ENCODE measurements at regions of chr18 and their contacts with region 1.

Region 1: DNA sequence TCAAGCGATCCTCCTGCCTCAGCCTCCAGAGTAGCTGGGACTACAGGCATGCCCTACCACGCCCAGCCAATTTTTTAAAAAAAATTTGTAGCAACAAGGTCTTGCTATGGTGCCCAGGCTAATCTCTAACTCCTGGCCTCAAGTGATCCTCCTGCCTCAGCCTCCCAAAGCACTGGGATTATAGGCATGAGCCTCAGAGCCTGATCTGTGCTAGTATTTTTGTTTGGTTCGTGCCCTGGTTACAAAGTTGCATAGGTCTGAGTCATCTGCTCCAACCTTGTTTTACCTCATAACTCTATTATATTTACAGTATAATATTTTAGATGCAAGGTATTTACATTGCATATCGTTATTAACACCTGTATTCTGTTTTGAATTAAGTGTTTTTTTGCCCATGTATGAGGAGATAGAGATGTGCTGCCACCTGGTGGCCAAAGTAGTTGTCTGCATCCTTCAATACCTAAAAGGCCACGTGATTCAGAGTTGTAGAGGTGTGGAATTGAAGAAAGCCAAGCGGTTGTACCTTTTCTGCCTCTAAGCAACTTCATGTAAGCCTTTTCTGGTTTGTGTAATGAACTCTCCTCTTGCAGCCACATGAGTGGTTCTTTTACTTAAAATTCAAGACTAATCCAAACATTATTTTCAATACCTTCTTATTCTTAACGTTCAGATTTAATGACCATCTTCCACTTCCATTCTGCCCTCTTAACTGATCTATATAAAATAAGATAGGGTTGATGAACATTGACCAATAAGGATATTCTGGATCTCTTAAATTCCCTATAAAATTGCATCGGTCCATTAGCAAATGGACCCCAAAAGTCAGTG is 19.9 kb upstream of the CABYR start:
- DNase-seq: peak; percentile 91
- H3K4me3 Mint-ChIP-seq: no peak overlapping the region
- H3K27ac Mint-ChIP-seq: no peak overlapping the region
- H3K4me1 Mint-ChIP-seq: peaks cover 14% of the 10 kb centered on the region
- H3K27me3 Mint-ChIP-seq: no peaks in the 10 kb centered on the region

Region 2: GRCh38 chr18:23515911-23516546 is 602.9 kb before region 1 on chr18:
- intact Hi-C with region 1: loop called (anchors 5 kb)
- DNase-seq: peak; percentile 93
- H3K4me3 Mint-ChIP-seq: no peak overlapping the region
- H3K27ac Mint-ChIP-seq: peak overlapping the region; percentile 57
- H3K4me1 Mint-ChIP-seq: peaks cover 26% of the 10 kb centered on the region
- H3K27me3 Mint-ChIP-seq: no peaks in the 10 kb centered on the region

Region 3: DNA sequence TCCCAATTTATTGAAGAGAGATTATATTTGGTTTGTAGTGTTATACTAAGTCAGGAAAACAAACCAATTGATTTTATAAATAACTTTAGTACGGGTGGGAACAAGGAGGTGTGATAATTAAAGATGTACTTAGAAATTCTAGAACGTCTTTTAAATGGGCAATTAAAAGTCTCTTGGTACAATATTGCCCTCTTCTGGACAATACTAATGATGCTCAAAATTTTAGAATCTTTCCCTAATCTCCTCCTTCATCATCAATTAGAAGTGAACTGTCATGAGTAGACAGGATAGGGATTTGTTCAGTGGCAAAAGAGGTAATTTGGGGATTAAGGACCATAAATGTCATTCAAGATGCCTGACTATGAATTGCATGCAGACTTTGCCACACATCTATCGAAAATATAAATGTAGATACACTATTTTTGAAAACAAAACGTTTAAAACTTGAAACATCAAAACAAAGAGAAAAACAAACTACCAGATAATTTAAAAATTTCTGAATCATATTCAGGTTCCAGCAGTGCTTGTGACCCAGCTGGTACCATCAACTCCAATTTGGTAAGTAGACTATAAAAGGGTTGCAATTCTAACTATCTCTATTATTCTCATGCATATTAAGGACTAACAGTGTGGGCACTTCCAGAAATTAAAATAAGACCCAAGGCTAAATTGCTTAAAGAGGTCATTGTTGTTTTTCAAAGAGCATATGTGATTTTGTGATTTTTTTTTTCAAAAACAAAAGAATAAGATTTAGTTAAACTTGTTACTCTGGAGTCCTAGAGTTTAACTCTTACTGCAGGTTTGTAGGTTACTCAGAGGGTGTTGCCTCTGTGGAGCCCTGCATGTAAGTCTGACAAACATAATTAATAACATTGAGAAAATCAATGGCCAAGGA is 306.2 kb before region 1 on chr18:
- intact Hi-C with region 1: loop called (anchors 1 kb)
- DNase-seq: no peak
- H3K4me3 Mint-ChIP-seq: no peak overlapping the region
- H3K27ac Mint-ChIP-seq: no peak overlapping the region
- H3K4me1 Mint-ChIP-seq: peaks cover 20% of the 10 kb centered on the region
- H3K27me3 Mint-ChIP-seq: peaks cover 28% of the 10 kb centered on the region

Region 4: GRCh38 chr18:23918401-23919032 is 200.4 kb before region 1 on chr18:
- intact Hi-C with region 1: loop called (anchors 2 kb)
- DNase-seq: peak; percentile 93
- H3K4me3 Mint-ChIP-seq: no peak overlapping the region
- H3K27ac Mint-ChIP-seq: no peak overlapping the region
- H3K4me1 Mint-ChIP-seq: peaks cover 26% of the 10 kb centered on the region
- H3K27me3 Mint-ChIP-seq: peaks cover 21% of the 10 kb centered on the region

Region 5: DNA sequence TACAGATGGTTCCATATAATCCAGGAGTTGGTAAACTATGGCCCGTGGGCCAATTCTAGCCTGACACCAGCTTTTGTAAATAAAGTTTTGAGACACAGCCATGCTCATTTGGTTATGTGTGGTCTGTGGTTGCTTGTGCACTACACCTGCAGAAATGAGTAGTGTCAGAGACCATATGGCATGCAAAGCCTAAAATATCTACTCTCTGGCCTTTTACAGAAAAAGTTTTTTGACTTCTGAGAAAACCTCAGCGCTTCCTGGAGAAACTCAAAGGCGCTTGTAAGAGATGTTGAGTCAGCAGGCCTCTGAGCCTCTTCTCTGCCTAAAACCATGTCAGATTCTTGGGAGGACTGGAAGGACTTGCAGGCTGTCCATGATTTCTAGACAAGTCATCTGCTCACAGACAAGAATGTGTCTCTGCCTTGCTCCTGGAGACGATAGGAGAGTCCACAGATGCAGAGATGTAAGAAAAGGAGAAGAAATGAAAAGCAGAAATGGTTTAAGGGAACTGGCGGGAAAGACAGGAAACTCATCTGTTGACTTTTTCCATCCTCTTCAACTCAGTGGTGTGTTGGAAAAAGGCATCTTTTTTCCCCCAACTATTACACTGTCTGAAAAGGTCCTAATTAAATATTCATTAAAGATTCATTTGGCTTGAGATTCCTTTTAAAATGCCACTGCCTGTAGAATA is 99.2 kb before region 1 on chr18:
- intact Hi-C with region 1: loop called (anchors 2 kb)
- DNase-seq: peak; percentile 91
- H3K4me3 Mint-ChIP-seq: peak overlapping the region; percentile 87
- H3K27ac Mint-ChIP-seq: peak overlapping the region; percentile 94
- H3K4me1 Mint-ChIP-seq: peaks cover 78% of the 10 kb centered on the region
- H3K27me3 Mint-ChIP-seq: no peaks in the 10 kb centered on the region

Region 6: GRCh38 chr18:24075731-24076130 is 43.2 kb before region 1 on chr18:
- intact Hi-C with region 1: loop called (anchors 2 kb)
- DNase-seq: no peak
- H3K4me3 Mint-ChIP-seq: peak overlapping the region; percentile 51
- H3K27ac Mint-ChIP-seq: peak overlapping the region; percentile 85
- H3K4me1 Mint-ChIP-seq: peaks cover 25% of the 10 kb centered on the region
- H3K27me3 Mint-ChIP-seq: no peaks in the 10 kb centered on the region